Kidney (tissue), 22 donors: ENCODE measurements at regions of chr7 and their contacts with region 1.

Region 1: GRCh38 chr7:101140339-101140699 is 13.4 kb downstream of the SERPINE1 start:
- DNase-seq: peak in 1 of 5 donors; percentile 32
- H3K4me3 ChIP-seq: no peak overlapping the region
- H3K27ac ChIP-seq: no peak overlapping the region
- H3K4me1 ChIP-seq: peaks cover 0 to 5% (median 0%) of the 10 kb centered on the region in 3 donors
- H3K27me3 ChIP-seq: no peaks in the 10 kb centered on the region
- CTCF ChIP-seq: no peak

Region 2: GRCh38 chr7:100827330-100828227 is 312.7 kb before region 1 on chr7 and contains the start of gene EPHB4:
- intact Hi-C with region 1: no loop called
- DNase-seq: peak; percentile 92 to 98 (median 95)
- H3K4me3 ChIP-seq: peak within 1 kb of the TSS; percentile 70 to 87 (median 79)
- H3K27ac ChIP-seq: peak within 1 kb of the TSS; percentile 43 to 77
- H3K4me1 ChIP-seq: peaks cover 0 to 3% (median 0%) of the 10 kb centered on the region in 3 donors
- H3K27me3 ChIP-seq: no peaks in the 10 kb centered on the region
- CTCF ChIP-seq: peak; percentile 19
- total RNA-seq, gene EPHB4: 65.5 TPM

Region 3: DNA sequence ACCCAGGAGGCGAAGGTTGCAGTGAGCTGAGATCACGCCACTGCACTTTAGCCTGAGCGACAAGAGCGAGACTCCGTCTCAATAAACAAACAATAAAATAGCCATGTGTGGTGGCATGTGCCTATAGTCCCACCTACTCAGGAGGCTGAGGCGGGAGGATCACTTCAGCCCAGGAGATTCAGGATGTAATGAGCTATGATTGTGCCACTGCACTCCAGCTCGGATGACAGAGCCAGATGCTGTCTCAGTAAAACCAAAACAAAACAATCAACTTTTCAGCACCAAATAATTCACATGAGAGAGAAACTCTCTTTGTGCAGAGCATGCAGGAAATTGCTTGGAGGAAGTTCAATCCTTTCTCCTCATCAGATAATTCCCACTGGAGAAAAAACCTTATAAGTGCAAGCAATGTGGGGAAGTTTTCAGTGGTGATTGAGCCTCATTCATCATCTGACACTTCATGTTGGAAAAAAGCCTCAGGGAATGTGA is 118.0 kb after region 1 on chr7:
- intact Hi-C with region 1: no loop called
- DNase-seq: no peak
- H3K4me3 ChIP-seq: no peak overlapping the region
- H3K27ac ChIP-seq: no peak overlapping the region
- H3K4me1 ChIP-seq: no peaks in the 10 kb centered on the region
- H3K27me3 ChIP-seq: no peaks in the 10 kb centered on the region
- CTCF ChIP-seq: no peak

Region 4: GRCh38 chr7:101287032-101287431 is 146.7 kb after region 1 on chr7:
- intact Hi-C with region 1: loop called (anchors 10 kb)
- DNase-seq: no peak
- H3K4me3 ChIP-seq: no peak overlapping the region
- H3K27ac ChIP-seq: no peak overlapping the region
- H3K4me1 ChIP-seq: peaks cover 0 to 3% (median 3%) of the 10 kb centered on the region in 3 donors
- H3K27me3 ChIP-seq: no peaks in the 10 kb centered on the region
- CTCF ChIP-seq: no peak